ENCODE measurements at regions of chr10 and their contacts with region 1.

Region 1: GRCh38 chr10:22003079-22003913 is at the start of gene DNAJC1:
- DNase-seq: peak; percentile 99
- H3K4me3 ChIP-seq: peak within 1 kb of the TSS; percentile 65 to 91 (median 80)
- H3K27ac ChIP-seq: peak within 1 kb of the TSS; percentile 93 to 99 (median 98)
- H3K4me1 ChIP-seq: peaks cover 0 to 21% (median 13%) of the 10 kb centered on the region in 4 donors
- H3K27me3 ChIP-seq: no peaks in the 10 kb centered on the region
- CTCF ChIP-seq: peak in 2 of 5 experiments; percentile 6 to 31
- EP300 ChIP-seq: no peak
- POLR2A ChIP-seq: peak; percentile 81
- total RNA-seq, gene DNAJC1: 18.5 to 71.7 (median 48.4) TPM

Region 2: DNA sequence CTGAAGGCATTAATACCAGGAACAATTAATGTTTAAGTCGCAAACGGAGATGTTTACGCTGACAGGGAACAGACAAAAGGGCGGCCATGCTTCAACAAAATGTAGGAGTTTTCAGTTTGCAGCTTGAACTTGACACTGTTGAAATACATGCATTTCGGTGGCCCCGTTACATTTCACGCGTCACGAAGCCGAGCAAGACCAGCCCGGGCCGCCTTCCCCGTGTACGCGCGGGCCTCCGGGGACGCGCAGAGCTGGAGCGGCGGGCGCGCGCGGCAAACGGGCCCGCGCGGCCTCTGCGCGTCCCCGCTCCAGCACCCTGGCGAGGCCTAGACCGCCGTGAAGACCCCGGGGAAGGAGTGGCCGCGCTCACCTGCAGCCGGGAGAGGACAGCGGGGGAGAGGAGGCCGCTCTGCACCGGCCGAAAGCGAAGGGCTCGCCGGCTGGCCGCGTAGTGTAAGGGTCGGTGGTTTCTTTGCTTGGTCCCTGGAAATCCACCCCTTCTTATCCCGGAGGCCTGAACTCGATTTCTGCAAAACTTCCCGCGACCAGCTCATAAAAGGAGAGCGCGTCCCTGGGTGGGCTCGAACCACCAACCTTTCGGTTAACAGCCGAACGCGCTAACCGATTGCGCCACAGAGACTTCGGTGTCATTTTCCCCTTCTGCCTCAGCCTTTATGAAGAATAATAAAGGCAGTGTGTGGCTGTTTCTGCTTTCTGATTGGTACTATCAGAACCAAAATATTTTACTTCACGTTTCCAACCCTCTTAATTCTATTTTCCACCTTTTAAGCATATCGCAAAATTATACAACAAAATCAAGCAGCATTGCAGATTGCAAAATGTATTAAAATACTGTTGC is 225.9 kb after region 1 on chr10:
- in situ Hi-C with region 1: loop called in 2 of 4 experiments (anchors 10 kb)
- intact Hi-C with region 1: no loop called
- DNase-seq: peak; percentile 83
- H3K4me3 ChIP-seq: peak overlapping the region; percentile 66 to 95 (median 80)
- H3K27ac ChIP-seq: peak overlapping the region; percentile 89 to 95 (median 91)
- H3K4me1 ChIP-seq: peaks cover 0 to 16% (median 5%) of the 10 kb centered on the region in 4 donors
- H3K27me3 ChIP-seq: peaks cover 5% of the 10 kb centered on the region
- CTCF ChIP-seq: peak in 1 of 5 experiments; percentile 9
- EP300 ChIP-seq: no peak
- POLR2A ChIP-seq: peak; percentile 32

Region 3: GRCh38 chr10:22316285-22317120 is 313.2 kb after region 1 on chr10 and contains the start of gene COMMD3:
- in situ Hi-C with region 1: loop called in 3 of 4 experiments (anchors 10 to 25 kb)
- intact Hi-C with region 1: loop called (anchors 5 kb)
- DNase-seq: peak; percentile 88
- H3K4me3 ChIP-seq: peak within 1 kb of the TSS; percentile 83 to 98 (median 91)
- H3K27ac ChIP-seq: peak within 1 kb of the TSS; percentile 96 to 99 (median 97)
- H3K4me1 ChIP-seq: peaks cover 3 to 35% (median 14%) of the 10 kb centered on the region in 4 donors
- H3K27me3 ChIP-seq: no peaks in the 10 kb centered on the region
- CTCF ChIP-seq: no peak
- EP300 ChIP-seq: no peak
- POLR2A ChIP-seq: peak; percentile 79
- total RNA-seq, gene COMMD3: 3.0 to 35.1 (median 18.3) TPM

Region 4: GRCh38 chr10:22436884-22437619 is 433.8 kb after region 1 on chr10:
- in situ Hi-C with region 1: loop called in 3 of 4 experiments (anchors 25 kb)
- intact Hi-C with region 1: no loop called
- DNase-seq: peak; percentile 91
- H3K4me3 ChIP-seq: peak overlapping the region; percentile 61 to 88 (median 81)
- H3K27ac ChIP-seq: peak overlapping the region; percentile 92 to 98 (median 97)
- H3K4me1 ChIP-seq: peaks cover 9 to 22% (median 15%) of the 10 kb centered on the region in 4 donors
- H3K27me3 ChIP-seq: peaks cover 4% of the 10 kb centered on the region
- CTCF ChIP-seq: peak in 4 of 5 experiments; percentile 15 to 30 (median 20)
- EP300 ChIP-seq: no peak
- POLR2A ChIP-seq: peak; percentile 92

Region 5: GRCh38 chr10:22714479-22715289 is 711.4 kb after region 1 on chr10 and contains the start of gene PIP4K2A:
- in situ Hi-C with region 1: loop called in 2 of 4 experiments (anchors 25 kb)
- intact Hi-C with region 1: no loop called
- DNase-seq: peak; percentile 82
- H3K4me3 ChIP-seq: peak within 1 kb of the TSS; percentile 74 to 97 (median 87)
- H3K27ac ChIP-seq: peak within 1 kb of the TSS; percentile 88 to 90 (median 90)
- H3K4me1 ChIP-seq: peaks cover 6 to 30% (median 14%) of the 10 kb centered on the region in 4 donors
- H3K27me3 ChIP-seq: no peaks in the 10 kb centered on the region
- CTCF ChIP-seq: no peak
- EP300 ChIP-seq: no peak
- POLR2A ChIP-seq: no peak
- total RNA-seq, gene PIP4K2A: 2.6 to 14.9 (median 12.4) TPM